ENCODE measurements at regions of chr3 and their contacts with region 1.

Region 1: DNA sequence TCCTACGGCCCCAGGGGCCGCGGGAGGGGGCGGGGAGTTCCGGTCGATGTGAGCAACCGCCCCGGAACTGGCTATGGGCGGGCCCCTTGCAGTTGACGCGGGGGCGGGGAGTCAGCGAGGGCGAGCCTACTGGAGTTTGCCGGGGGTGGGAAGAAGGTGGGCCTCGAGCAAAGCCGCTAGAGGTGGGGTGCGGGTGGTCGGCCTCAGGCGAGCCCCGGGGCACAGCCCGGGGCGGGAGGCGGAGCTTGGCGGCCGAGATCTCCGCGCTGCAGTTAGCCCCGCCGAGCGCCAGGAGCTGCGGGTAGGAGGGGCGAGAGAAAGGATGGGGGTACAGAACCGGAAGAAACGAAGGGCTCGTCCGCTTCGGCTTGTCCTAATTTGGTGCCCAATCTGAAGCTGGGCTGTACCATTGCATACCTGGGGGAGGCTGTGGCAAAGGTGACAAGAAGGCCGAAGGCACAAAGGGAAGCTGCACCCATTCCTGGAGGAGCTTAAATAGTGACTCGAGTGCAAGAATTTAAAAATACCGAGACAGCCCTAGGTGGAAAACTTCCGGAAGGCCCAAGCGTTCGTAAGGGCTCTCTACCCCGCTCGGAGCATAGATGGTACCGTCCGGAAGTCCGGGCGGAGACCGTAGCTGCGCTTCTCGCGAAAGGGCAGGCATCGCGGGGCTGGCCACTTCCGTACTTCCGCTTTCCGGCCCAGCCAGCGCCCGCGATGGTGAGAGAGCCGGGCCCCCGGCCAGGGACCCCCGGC is at the starts of genes ARPC4 and TADA3:
- DNase-seq: peak; percentile 94
- H3K4me3 ChIP-seq: peak within 1 kb of the TSS; percentile 90
- H3K27ac ChIP-seq: peak within 1 kb of the TSS; percentile 96
- H3K4me1 ChIP-seq: peaks cover 4% of the 10 kb centered on the region
- H3K27me3 ChIP-seq: no peaks in the 10 kb centered on the region
- CTCF ChIP-seq: no peak
- total RNA-seq, gene ARPC4: 221 to 228 TPM
- total RNA-seq, gene TADA3: 60.1 to 66.4 TPM

Region 2: GRCh38 chr3:9749645-9750555 is 42.7 kb before region 1 on chr3 and contains the start of gene OGG1:
- intact Hi-C with region 1: loop called (anchors 5 kb)
- DNase-seq: peak; percentile 99
- H3K4me3 ChIP-seq: peak within 1 kb of the TSS; percentile 54
- H3K27ac ChIP-seq: peak within 1 kb of the TSS; percentile 90
- H3K4me1 ChIP-seq: peaks cover 7% of the 10 kb centered on the region
- H3K27me3 ChIP-seq: no peaks in the 10 kb centered on the region
- CTCF ChIP-seq: no peak
- total RNA-seq, gene OGG1: 19.1 to 24.9 TPM